ENCODE measurements at regions of chr9 and their contacts with region 1.

Region 1: DNA sequence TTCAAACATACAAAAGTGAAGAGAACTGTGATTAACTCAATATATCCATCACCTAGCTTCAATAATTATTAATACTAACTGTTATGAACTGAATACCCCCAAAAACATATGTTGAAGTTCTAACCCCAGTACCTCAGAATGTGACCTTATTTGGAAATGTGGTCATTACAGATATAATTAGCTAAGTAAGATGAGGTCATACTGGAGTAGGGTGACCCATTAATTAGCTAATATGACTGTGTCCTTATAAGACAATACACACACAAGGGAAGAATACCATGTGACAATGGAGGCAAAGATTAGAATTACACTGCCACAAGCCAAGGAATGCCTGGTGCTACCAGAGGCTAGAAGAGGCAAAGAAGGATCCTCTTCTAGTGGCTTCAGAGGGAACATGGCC is 7.8 kb downstream of the RRAGA start:
- DNase-seq: no peak
- H3K4me3 ChIP-seq: no peak overlapping the region
- H3K27ac ChIP-seq: no peak overlapping the region
- H3K4me1 ChIP-seq: no peaks in the 10 kb centered on the region
- H3K27me3 ChIP-seq: no peaks in the 10 kb centered on the region
- CTCF ChIP-seq: no peak

Region 2: GRCh38 chr9:19018201-19018600 is 38.8 kb before region 1 on chr9:
- CTCF ChIA-PET with region 1: no interaction called
- POLR2A ChIA-PET with region 1: no interaction called
- intact Hi-C with region 1: no loop called
- DNase-seq: no peak
- H3K4me3 ChIP-seq: no peak overlapping the region
- H3K27ac ChIP-seq: no peak overlapping the region
- H3K4me1 ChIP-seq: no peaks in the 10 kb centered on the region
- H3K27me3 ChIP-seq: no peaks in the 10 kb centered on the region
- CTCF ChIP-seq: no peak

Region 3: GRCh38 chr9:19137282-19137681 is 80.2 kb after region 1 on chr9:
- CTCF ChIA-PET with region 1: no interaction called
- POLR2A ChIA-PET with region 1: no interaction called
- intact Hi-C with region 1: no loop called
- DNase-seq: peak in 1 of 2 experiments; percentile 66
- H3K4me3 ChIP-seq: no peak overlapping the region
- H3K27ac ChIP-seq: peak overlapping the region; percentile 68
- H3K4me1 ChIP-seq: peaks cover 24% of the 10 kb centered on the region
- H3K27me3 ChIP-seq: no peaks in the 10 kb centered on the region
- CTCF ChIP-seq: no peak

Region 4: DNA sequence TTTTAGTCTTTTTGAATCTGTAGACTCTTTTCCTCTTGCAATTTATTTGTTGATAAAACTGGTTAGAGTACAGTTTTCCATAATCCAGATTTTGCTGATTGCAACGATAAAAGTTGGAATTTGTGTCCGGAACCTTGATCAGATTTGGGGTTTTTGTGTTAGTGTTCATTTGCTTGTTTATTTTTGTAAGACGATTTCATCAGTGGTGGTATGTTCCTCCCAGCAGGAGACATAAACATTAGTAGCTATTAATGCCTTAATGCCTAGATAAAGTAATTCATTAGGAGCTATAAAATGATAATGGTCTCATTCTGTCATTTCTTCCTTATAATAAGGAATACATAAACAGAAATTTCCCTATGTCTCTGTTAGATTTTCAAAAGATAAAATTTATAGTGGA is 301.7 kb after region 1 on chr9:
- CTCF ChIA-PET with region 1: no interaction called
- POLR2A ChIA-PET with region 1: no interaction called
- intact Hi-C with region 1: loop called (anchors 10 kb)
- DNase-seq: no peak
- H3K4me3 ChIP-seq: no peak overlapping the region
- H3K27ac ChIP-seq: no peak overlapping the region
- H3K4me1 ChIP-seq: no peaks in the 10 kb centered on the region
- H3K27me3 ChIP-seq: no peaks in the 10 kb centered on the region
- CTCF ChIP-seq: no peak

Measured in PC-9 (cell line).